Activated B cell treated with CpG ODN at 0.5 μM for 24 hours (primary cell): ENCODE measurements at regions of chr20 and their contacts with region 1.

Region 1: GRCh38 chr20:17403461-17403860 is 127.7 kb downstream of the BFSP1 start:
- DNase-seq: no peak
- ATAC-seq: no peak
- H3K4me3 Mint-ChIP-seq: no peak overlapping the region
- H3K27ac Mint-ChIP-seq: no peak overlapping the region
- H3K4me1 Mint-ChIP-seq: no peaks in the 10 kb centered on the region
- H3K27me3 Mint-ChIP-seq: peaks cover 14% of the 10 kb centered on the region
- CTCF ChIP-seq: no peak

Region 2: DNA sequence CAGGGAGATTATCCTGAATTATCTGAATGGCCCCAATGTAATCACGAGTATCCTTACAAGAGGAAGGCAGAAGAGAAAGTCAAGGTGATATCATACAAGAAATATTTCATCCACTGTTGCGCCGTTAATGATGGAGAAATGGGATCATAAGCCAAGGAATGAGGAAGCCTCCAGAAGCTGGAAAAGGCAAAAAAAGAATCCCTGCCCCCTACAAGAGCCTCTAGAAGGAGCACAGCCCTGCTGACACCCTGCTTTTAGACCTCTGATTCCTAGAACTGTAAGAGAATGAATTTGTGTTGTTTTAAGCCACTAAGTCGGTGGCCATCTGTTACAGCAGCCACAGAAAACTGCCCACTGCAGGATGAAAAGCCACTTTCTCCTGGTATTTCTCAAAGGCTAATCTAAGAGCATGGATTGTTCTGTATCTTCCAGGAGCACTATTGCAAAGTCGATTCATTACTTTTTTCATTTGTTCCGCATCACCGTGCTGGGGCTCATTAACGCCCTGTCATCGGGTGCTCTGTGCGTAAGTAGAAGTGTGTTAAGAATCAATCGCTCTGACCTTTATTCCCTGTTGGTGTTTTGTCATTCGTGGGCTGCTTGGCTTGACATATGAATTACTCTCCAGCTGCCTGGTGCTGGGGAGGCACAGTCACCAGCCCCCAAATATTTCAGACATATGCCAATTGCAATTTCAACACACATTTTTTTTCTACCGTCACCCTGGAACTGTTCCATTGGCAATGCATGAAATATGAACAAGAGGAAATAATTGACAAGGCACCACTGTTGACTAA is 59.6 kb before region 1 on chr20:
- CTCF ChIA-PET with region 1: no interaction called
- POLR2A ChIA-PET with region 1: no interaction called
- intact Hi-C with region 1: loop called (anchors 10 kb)
- DNase-seq: no peak
- ATAC-seq: no peak
- H3K4me3 Mint-ChIP-seq: no peak overlapping the region
- H3K27ac Mint-ChIP-seq: no peak overlapping the region
- H3K4me1 Mint-ChIP-seq: no peaks in the 10 kb centered on the region
- H3K27me3 Mint-ChIP-seq: no peaks in the 10 kb centered on the region
- CTCF ChIP-seq: no peak

Region 3: DNA sequence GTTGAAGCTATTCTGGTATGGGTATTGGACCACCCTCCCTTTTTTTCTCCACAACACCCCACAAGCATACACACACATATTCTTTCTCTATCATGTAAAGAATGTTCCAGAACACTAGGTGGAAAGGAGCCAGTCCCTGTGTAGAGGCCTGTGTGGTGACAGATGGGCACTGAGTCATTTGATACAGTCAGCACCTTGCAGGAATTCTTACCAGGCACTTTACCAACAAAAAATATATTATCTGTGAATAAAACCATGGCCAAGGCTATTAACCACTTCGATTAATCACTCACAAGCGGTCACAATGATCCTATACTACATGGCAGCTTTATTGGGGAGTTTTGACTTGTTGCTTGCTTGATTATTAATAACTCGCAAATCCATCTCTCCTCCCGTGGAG is 21.7 kb before region 1 on chr20:
- CTCF ChIA-PET with region 1: no interaction called
- POLR2A ChIA-PET with region 1: no interaction called
- intact Hi-C with region 1: no loop called
- DNase-seq: no peak
- ATAC-seq: no peak
- H3K4me3 Mint-ChIP-seq: no peak overlapping the region
- H3K27ac Mint-ChIP-seq: no peak overlapping the region
- H3K4me1 Mint-ChIP-seq: no peaks in the 10 kb centered on the region
- H3K27me3 Mint-ChIP-seq: peaks cover 9% of the 10 kb centered on the region
- CTCF ChIP-seq: no peak